Cardiac septum (tissue), 1 donor: ENCODE measurements at regions of chr5 and their contacts with region 1.

Region 1: GRCh38 chr5:15499528-15500324 is at the start of gene FBXL7:
- DNase-seq: peak; percentile 92
- total RNA-seq, gene FBXL7: 26.2 TPM

Region 2: DNA sequence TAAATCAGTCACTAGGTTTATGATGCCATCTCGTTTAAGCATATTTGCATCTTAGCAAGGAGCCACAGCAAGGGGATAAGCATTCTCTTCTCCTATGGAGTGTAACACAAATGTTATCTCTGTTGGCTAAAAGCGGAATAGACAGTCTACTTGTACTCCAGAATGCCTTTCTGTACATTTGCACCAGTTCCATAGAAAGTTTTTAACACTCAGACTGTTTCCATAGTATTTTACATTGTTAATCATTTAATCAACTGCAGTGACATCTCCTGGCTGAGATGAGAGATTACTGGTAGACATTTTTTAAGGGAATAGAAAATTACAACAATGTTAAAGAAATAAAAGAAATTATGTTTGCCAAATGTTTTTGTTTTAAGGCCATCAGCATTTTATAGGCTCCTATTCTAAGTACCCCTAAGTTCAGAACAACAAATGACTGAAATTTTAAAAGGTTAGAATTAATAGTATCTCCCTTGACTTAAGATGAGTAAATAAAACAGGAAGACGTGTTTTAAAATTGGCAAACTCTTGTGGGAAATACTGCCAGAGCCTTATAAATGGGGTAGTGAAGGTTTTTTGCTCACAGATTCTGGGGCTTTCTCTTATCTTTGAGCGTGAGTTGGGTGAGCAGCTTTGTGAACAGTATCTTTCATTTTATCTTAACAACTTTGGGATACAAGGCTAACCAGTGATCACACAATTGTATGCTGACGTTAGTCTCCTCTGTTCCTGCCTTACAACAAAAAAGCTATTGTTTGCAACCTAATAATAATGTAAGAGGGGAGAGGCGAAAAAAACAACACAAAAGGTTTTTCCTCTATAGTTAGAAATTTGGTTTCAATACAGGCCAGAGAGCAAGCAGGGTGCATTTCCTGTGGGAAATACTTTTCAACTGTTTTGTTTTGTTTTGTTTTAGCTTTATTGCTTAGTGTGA is 294.6 kb after region 1 on chr5:
- intact Hi-C with region 1: loop called (anchors 5 kb)
- DNase-seq: no peak

Region 3: DNA sequence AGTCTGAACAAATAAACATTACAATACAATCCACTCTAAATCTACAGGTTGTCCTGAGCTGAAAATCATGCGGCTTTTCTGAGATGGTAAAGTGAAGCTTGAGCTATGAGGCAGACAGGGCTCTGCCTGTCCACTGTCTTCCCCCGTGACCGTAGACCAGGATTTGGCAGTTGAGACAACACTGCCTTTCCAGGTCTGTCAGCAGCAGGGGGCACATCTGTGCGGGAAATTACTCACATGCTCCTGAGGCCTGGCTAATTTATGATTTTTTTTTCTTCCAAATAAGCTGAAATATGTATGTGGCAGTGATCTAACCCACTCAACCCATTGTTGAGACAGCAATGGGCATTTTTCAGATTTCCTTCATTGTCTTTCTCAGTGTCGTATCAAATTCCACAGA is 308.1 kb after region 1 on chr5:
- intact Hi-C with region 1: loop called (anchors 5 kb)
- DNase-seq: peak; percentile 82

Region 4: GRCh38 chr5:15821506-15821905 is 321.8 kb after region 1 on chr5:
- intact Hi-C with region 1: loop called (anchors 5 kb)
- DNase-seq: no peak